Pancreas (tissue), 10 donors: ENCODE measurements at regions of chr12 and their contacts with region 1.

Region 1: DNA sequence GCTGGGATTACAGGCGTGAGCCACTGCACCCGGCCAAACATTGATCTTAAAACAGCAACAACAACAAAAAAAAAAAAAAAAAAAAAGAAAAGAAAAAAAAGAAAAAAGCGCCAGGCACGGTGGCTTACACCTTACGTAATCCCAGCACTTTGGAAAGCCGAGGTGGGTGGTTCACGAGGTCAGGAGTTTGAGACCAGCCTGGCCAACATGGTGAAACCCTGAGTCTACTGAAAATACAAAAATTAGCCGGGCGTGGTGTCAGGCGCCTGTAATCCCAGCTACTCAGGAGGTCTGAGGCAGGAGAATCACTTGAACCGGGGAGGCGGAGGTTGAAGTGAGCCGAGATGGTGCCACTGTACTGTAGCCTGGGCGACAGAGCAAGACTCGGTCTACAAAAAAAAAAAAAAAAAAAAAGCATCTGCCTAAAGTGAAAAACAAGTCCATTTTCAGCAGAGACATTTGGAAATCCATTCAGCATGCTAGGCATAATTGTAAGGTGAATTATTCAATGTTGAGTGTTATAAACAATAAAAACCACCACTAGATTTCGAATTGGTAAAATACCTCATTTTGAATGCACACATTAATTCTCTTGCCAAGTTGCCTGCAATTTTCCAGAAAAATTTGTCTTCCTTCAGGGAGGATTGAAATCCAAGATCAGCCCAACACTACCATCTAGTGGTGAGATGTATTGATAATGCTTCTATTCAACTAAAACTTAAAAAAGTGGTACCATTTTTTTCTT is 8.0 kb upstream of the CERS5 start:
- DNase-seq: no peak
- ATAC-seq: peak; percentile 36 to 84 (median 76)
- H3K4me3 ChIP-seq: no peak overlapping the region
- H3K27ac ChIP-seq: no peak overlapping the region
- H3K4me1 ChIP-seq: no peaks in the 10 kb centered on the region
- H3K27me3 ChIP-seq: no peaks in the 10 kb centered on the region
- CTCF ChIP-seq: peak; percentile 32 to 59 (median 54)

Region 2: GRCh38 chr12:50084775-50085614 is 90.1 kb before region 1 on chr12 and contains the start of gene SMARCD1:
- intact Hi-C with region 1: loop called in 2 of 3 experiments (anchors 5 to 10 kb)
- DNase-seq: peak; percentile 86 to 96 (median 89)
- ATAC-seq: peak; percentile 92 to 94 (median 93)
- H3K4me3 ChIP-seq: peak within 1 kb of the TSS; percentile 68 to 98 (median 86)
- H3K27ac ChIP-seq: peak within 1 kb of the TSS; percentile 89 to 95 (median 93)
- H3K4me1 ChIP-seq: peaks cover 0 to 3% (median 0%) of the 10 kb centered on the region in 3 donors
- H3K27me3 ChIP-seq: no peaks in the 10 kb centered on the region
- CTCF ChIP-seq: no peak
- total RNA-seq, gene SMARCD1: 13.7 to 22.8 (median 15.4) TPM

Region 3: GRCh38 chr12:50099302-50100008 is 75.7 kb before region 1 on chr12:
- intact Hi-C with region 1: loop called in 1 of 3 experiments (anchors 10 kb)
- DNase-seq: no peak
- ATAC-seq: no peak
- H3K4me3 ChIP-seq: no peak overlapping the region
- H3K27ac ChIP-seq: no peak overlapping the region
- H3K4me1 ChIP-seq: peaks cover 5 to 10% (median 5%) of the 10 kb centered on the region in 3 donors
- H3K27me3 ChIP-seq: no peaks in the 10 kb centered on the region
- CTCF ChIP-seq: no peak

Region 4: GRCh38 chr12:50222275-50222795 is 47.2 kb after region 1 on chr12:
- intact Hi-C with region 1: no loop called
- DNase-seq: no peak
- ATAC-seq: peak in 3 of 4 donors; percentile 58 to 66 (median 62)
- H3K4me3 ChIP-seq: peak overlapping the region in 1 of 4 donors; percentile 25
- H3K27ac ChIP-seq: peak overlapping the region in 3 of 4 donors; percentile 10 to 25 (median 11)
- H3K4me1 ChIP-seq: peaks cover 0 to 15% (median 0%) of the 10 kb centered on the region in 3 donors
- H3K27me3 ChIP-seq: no peaks in the 10 kb centered on the region
- CTCF ChIP-seq: no peak

Region 5: DNA sequence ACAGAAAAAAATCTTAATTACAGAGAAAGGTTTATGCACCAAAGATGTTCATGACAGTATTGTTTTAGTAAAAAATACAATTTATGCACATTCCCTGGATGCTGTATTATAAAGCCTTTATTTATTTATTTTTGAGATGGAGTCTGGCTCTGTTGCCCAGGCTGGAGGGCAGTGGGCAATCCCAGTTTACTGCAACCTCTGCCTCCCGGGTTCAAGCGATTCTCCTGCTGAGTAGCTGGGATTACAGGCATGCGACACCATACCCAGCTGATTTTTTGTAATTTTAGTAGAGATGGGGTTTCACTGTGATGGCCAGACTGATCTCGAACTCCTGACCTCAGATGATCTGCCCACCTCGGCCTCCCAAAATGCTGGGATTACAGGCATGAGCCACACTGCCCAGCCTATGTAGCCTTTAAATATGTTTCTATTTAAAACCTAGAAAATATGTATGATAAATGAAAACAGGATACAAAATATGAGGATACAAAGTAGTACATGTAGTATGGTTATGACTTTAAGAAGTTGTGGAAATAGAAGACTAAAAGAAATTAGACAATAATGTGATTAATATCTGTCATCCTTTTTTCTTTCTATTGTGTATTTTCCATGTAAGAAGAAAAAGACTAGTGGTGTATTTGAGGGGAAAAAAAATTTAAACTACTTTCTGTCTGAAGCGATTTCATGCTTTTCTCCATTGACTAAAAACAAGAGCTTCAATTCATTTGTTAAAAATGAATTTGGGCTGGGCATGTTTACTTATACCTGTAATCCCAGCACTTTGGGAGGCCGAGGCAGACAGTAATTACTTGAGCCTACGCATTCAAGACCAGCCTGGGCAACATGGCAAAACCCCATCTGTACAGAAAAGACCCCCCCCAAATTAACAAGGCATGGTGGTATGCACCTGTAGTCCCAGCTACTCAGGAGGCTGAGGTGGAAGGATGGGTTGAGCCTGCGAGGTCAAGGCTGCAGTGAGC is 601.9 kb after region 1 on chr12:
- intact Hi-C with region 1: no loop called
- DNase-seq: no peak
- ATAC-seq: no peak
- H3K4me3 ChIP-seq: no peak overlapping the region
- H3K27ac ChIP-seq: no peak overlapping the region
- H3K4me1 ChIP-seq: no peaks in the 10 kb centered on the region
- H3K27me3 ChIP-seq: no peaks in the 10 kb centered on the region
- CTCF ChIP-seq: no peak